Posterior vena cava (tissue), 2 donors: ENCODE measurements at regions of chr6 and their contacts with region 1.

Region 1: DNA sequence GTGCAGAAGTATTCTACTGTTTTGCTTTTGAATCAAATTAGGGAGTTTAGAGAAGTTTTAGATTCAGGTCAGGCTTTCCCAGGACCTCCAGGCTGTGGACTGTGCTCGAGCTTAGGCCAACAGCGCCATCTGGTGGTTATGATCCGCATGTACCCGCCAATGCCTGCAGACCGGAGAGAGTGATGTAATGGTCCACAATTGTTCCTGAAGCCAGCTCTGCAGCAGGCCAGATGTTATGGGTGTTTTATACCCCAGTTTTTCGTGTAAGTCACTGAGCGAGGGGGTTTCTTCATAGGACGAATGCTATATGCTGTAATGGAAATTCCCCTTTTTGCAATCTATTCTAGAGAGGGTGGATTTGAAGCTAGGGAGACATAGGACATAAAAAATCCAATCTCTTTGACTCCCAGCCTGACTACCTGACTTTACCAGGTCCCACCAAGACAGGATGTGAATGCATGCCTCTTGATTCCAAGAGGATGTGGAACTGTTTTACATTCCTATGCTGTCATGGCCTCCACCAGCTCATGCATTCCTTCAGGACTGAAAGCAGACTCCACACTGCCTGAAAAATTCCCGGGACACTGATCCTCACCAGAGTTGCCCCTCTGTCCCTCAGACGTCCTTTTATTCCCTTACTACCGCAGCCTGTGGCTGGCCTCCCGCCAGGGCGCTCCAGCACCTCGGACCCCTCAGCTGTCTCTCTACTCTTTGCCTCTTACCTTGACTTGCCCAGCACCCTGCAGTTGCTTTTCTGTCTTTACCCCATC is 41.2 kb upstream of the LY86 start:
- DNase-seq: peak; percentile 95

Region 2: DNA sequence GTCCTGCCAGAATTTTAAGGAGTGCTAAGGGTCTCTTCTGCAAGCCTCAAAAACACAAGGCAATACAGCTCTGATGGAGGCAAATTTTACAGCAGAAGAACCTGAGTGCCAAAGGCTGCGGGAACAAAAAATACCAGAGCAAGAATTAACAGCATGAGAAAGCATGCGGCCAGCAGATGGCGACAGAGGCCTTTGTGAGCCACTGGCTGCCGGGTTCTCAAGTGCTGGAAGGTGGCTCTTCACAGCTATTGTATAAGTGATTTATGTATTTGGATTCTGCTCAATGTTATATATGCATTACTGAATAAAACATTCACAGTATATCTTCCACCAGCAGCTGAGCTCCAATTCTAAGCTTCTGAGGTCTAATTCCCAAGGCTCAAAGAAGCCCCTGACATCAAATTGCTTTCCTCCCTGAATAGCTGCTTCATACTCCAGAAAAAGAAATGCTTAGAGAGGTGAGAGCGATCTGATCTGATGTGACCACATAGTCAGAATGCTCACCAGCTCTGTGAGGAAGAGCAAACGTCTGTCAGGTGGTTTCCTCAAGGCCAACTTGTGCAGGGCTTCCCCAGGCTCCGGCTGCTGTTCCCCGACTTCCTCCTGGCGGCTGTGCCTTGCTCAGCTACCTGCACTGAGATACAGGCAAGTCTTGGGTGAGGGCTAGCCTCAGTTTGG is 1403.5 kb before region 1 on chr6:
- intact Hi-C with region 1: loop called in 1 of 2 experiments (anchors 10 kb)
- DNase-seq: peak; percentile 95

Region 3: DNA sequence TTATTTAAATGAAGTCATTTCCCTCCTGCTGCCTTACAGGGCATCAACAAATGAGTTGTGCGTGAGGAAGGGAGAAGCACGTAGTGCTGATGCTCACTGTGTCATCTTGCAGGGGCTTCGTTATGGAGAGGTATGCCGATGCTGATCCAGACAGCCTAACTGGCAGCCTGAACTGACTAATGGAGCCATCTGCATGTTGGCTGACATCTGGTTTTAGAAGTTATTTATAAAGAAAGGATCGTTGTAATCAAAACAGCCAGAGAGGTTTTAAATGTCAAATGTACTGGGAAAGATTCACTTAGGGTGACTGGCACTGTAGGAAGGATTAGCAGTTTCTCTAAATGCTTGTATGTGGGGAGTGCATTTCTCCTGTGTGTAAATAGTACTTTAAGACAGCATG is 1231.4 kb before region 1 on chr6:
- intact Hi-C with region 1: no loop called
- DNase-seq: no peak

Region 4: GRCh38 chr6:6057424-6058053 is 489.8 kb before region 1 on chr6:
- intact Hi-C with region 1: loop called in 1 of 2 experiments (anchors 10 kb)
- DNase-seq: no peak

Region 5: GRCh38 chr6:6610031-6610591 is 62.8 kb after region 1 on chr6:
- intact Hi-C with region 1: loop called in 1 of 2 experiments (anchors 5 kb)
- DNase-seq: no peak